IMR-90 (cell line): ENCODE measurements at regions of chr15 and their contacts with region 1.

Region 1: GRCh38 chr15:88476635-88477060 is 9.1 kb downstream of the MRPS11 start:
- DNase-seq: peak; percentile 55
- ATAC-seq: peak; percentile 88
- H3K4me3 ChIP-seq: no peak overlapping the region
- H3K27ac ChIP-seq: no peak overlapping the region
- H3K4me1 ChIP-seq: peaks cover 2% of the 10 kb centered on the region; the same call in 1 of the 2 replicates
- H3K27me3 ChIP-seq: no peaks in the 10 kb centered on the region
- CTCF ChIP-seq: peak; percentile 65
- POLR2A ChIP-seq: 0 out of 2 replicates have a peak, but pooled peaks have one; percentile 34
- RAD21 ChIP-seq: peak; percentile 80

Region 2: GRCh38 chr15:88546248-88547129 is 69.8 kb after region 1 on chr15 and contains the start of gene DET1:
- CTCF ChIA-PET with region 1: no interaction called
- POLR2A ChIA-PET with region 1: no interaction called
- dilution Hi-C with region 1: no loop called
- in situ Hi-C with region 1: no loop called
- intact Hi-C with region 1: loop called (anchors 2 kb)
- DNase-seq: peak; percentile 94
- ATAC-seq: peak; percentile 99
- H3K4me3 ChIP-seq: peak within 1 kb of the TSS; percentile 84
- H3K27ac ChIP-seq: peak within 1 kb of the TSS; percentile 94
- H3K4me1 ChIP-seq: peaks cover 4% of the 10 kb centered on the region
- H3K27me3 ChIP-seq: no peaks in the 10 kb centered on the region
- CTCF ChIP-seq: peak; percentile 88
- POLR2A ChIP-seq: no peak
- RAD21 ChIP-seq: peak; percentile 41; the same call in 1 of the 2 replicates
- total RNA-seq, gene DET1: 8.6 and 9.1 TPM in 2 replicates

Region 3: DNA sequence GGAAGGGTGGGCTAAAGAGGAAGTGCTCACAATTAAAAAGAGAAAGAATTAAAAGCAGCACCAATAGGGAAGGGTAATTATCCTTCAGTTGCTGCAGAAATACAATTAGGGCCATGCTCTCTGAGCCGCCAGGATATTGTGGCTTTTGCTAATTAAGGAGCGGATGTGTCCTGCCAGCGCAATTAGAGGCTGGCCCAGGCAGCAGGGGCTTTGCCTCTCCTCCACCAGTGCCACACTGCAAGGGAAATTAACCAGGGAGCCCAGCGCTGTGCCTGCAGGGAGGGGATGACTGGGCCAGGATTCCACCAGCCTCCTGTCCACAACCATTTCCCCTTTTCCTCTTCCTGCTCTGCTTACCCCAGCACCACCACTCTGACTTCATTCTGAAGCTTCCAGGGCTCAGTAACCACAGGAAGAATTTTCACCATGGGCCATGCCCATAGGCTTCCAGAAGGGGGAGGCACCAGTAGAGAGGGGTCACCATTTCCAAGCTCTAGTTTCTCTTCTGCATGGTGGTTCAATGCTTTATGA is 134.1 kb after region 1 on chr15:
- CTCF ChIA-PET with region 1: no interaction called
- POLR2A ChIA-PET with region 1: no interaction called
- dilution Hi-C with region 1: no loop called
- in situ Hi-C with region 1: no loop called
- intact Hi-C with region 1: loop called (anchors 1 kb)
- DNase-seq: peak; percentile 13
- ATAC-seq: peak; percentile 25; the same call in 1 of the 2 replicates
- H3K4me3 ChIP-seq: no peak overlapping the region
- H3K27ac ChIP-seq: no peak overlapping the region
- H3K4me1 ChIP-seq: peaks cover 4% of the 10 kb centered on the region; the same call in 1 of the 2 replicates
- H3K27me3 ChIP-seq: peaks cover 34% of the 10 kb centered on the region
- CTCF ChIP-seq: 0 out of 2 replicates have a peak, but pooled peaks have one; percentile 13
- POLR2A ChIP-seq: no peak
- RAD21 ChIP-seq: no peak

Region 4: GRCh38 chr15:88814393-88814792 is 337.7 kb after region 1 on chr15:
- CTCF ChIA-PET with region 1: no interaction called
- POLR2A ChIA-PET with region 1: no interaction called
- dilution Hi-C with region 1: no loop called
- in situ Hi-C with region 1: no loop called
- intact Hi-C with region 1: no loop called
- DNase-seq: no peak
- ATAC-seq: no peak
- H3K4me3 ChIP-seq: no peak overlapping the region
- H3K27ac ChIP-seq: no peak overlapping the region
- H3K4me1 ChIP-seq: 0 out of 2 replicates have a peak, but pooled peaks cover 2% of the 10 kb centered on the region
- H3K27me3 ChIP-seq: peaks cover 9% of the 10 kb centered on the region
- CTCF ChIP-seq: no peak
- POLR2A ChIP-seq: no peak
- RAD21 ChIP-seq: no peak

Region 5: GRCh38 chr15:88834211-88834812 is 357.7 kb after region 1 on chr15:
- CTCF ChIA-PET with region 1: no interaction called
- POLR2A ChIA-PET with region 1: no interaction called
- dilution Hi-C with region 1: no loop called
- in situ Hi-C with region 1: loop called (anchors 25 kb)
- intact Hi-C with region 1: loop called (anchors 2 kb)
- DNase-seq: peak; percentile 63
- ATAC-seq: peak; percentile 83
- H3K4me3 ChIP-seq: no peak overlapping the region
- H3K27ac ChIP-seq: no peak overlapping the region
- H3K4me1 ChIP-seq: peaks cover 5% of the 10 kb centered on the region; the same call in 1 of the 2 replicates
- H3K27me3 ChIP-seq: no peaks in the 10 kb centered on the region
- CTCF ChIP-seq: peak; percentile 69
- POLR2A ChIP-seq: no peak
- RAD21 ChIP-seq: peak; percentile 76

Region 6: GRCh38 chr15:89017370-89018066 is 540.9 kb after region 1 on chr15:
- CTCF ChIA-PET with region 1: no interaction called
- POLR2A ChIA-PET with region 1: no interaction called
- dilution Hi-C with region 1: no loop called
- in situ Hi-C with region 1: loop called (anchors 25 kb)
- intact Hi-C with region 1: no loop called
- DNase-seq: peak; percentile 71
- ATAC-seq: peak; percentile 92
- H3K4me3 ChIP-seq: peak overlapping the region; percentile 22
- H3K27ac ChIP-seq: peak overlapping the region; percentile 6; the same call in 1 of the 2 replicates
- H3K4me1 ChIP-seq: peaks cover 9% of the 10 kb centered on the region
- H3K27me3 ChIP-seq: no peaks in the 10 kb centered on the region
- CTCF ChIP-seq: peak; percentile 88
- POLR2A ChIP-seq: no peak
- RAD21 ChIP-seq: peak; percentile 88